H1 (cell line): ENCODE measurements at regions of chr12 and their contacts with region 1.

Region 1: GRCh38 chr12:48021485-48022179 is 17.4 kb upstream of the COL2A1 start:
- DNase-seq: peak; percentile 74 to 97
- H3K4me3 ChIP-seq: no peak overlapping the region
- H3K27ac ChIP-seq: no peak overlapping the region
- H3K4me1 ChIP-seq: peaks cover 6 to 9% (median 7%) of the 10 kb centered on the region in 4 experiments
- H3K27me3 ChIP-seq: peaks cover 85 to 97% (median 97%) of the 10 kb centered on the region in 4 experiments
- CTCF ChIP-seq: no peak
- EP300 ChIP-seq: peak in 1 of 2 experiments; percentile 54; a peak in 1 of 3 replicates
- POLR2A ChIP-seq: no peak
- RAD21 ChIP-seq: peak in 1 of 2 experiments; percentile 33; a peak in 2 of 4 replicates

Region 2: GRCh38 chr12:47982770-47983169 is 38.9 kb before region 1 on chr12:
- CTCF ChIA-PET with region 1: no interaction called
- POLR2A ChIA-PET with region 1: no interaction called
- DNase-seq: no peak
- H3K4me3 ChIP-seq: no peak overlapping the region
- H3K27ac ChIP-seq: no peak overlapping the region
- H3K4me1 ChIP-seq: no peaks in the 10 kb centered on the region
- H3K27me3 ChIP-seq: no peaks in the 10 kb centered on the region
- CTCF ChIP-seq: no peak
- EP300 ChIP-seq: no peak
- POLR2A ChIP-seq: no peak
- RAD21 ChIP-seq: no peak

Region 3: GRCh38 chr12:48001505-48002413 is 19.9 kb before region 1 on chr12:
- CTCF ChIA-PET with region 1: interaction called, 21 read pairs
- POLR2A ChIA-PET with region 1: interaction called, 4 read pairs
- DNase-seq: peak in 1 of 2 experiments; percentile 81
- H3K4me3 ChIP-seq: peak overlapping the region; percentile 24 to 60 (median 44); a peak in 7 of 8 replicates
- H3K27ac ChIP-seq: no peak overlapping the region
- H3K4me1 ChIP-seq: peaks cover 21 to 34% (median 24%) of the 10 kb centered on the region in 4 experiments
- H3K27me3 ChIP-seq: peaks cover 60 to 98% (median 97%) of the 10 kb centered on the region in 4 experiments
- CTCF ChIP-seq: no peak
- EP300 ChIP-seq: no peak
- POLR2A ChIP-seq: no peak
- RAD21 ChIP-seq: no peak